ENCODE measurements at regions of chr11 and their contacts with region 1.

Region 1: DNA sequence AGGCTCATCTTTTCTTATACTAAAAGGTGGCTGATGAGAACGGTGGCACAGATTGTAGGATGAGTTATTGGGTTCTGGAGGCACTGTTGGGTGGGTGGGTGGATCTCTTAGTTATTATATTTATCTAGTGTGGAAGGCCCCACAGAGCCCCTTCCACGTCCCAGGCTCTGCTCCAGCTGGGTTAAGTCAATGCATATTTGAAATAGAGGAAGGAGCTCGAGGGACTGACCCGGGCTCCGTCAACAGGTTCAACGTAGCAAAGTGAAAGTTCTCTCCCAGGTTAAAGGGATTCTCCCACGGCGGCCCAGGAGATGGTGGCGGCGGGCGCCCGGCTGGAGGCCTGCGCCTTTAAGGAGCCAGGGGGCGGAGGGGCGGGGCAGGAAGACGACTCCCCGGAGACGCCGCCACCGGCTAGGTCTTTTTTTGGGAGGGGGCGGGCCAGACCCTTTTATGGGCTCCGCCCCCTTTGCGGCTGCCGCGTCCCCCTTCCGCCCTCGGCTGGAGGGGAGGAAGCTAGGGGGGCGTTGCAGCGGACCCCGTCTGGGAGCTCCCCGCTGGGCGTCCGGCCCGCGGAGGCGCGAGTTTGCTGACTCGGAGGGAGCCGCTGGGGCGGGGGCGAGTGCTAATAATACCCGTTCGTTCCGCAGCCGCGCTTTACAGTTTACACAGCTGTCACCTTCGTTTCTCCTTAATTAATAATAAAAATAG is 1.5 kb upstream of the INPPL1 start:
- DNase-seq: peak; percentile 97

Region 2: GRCh38 chr11:72026090-72026489 is 197.0 kb before region 1 on chr11:
- intact Hi-C with region 1: loop called in 1 of 2 experiments (anchors 10 kb)
- DNase-seq: no peak

Region 3: GRCh38 chr11:72162888-72163492 is 60.1 kb before region 1 on chr11:
- intact Hi-C with region 1: no loop called
- DNase-seq: no peak

Region 4: DNA sequence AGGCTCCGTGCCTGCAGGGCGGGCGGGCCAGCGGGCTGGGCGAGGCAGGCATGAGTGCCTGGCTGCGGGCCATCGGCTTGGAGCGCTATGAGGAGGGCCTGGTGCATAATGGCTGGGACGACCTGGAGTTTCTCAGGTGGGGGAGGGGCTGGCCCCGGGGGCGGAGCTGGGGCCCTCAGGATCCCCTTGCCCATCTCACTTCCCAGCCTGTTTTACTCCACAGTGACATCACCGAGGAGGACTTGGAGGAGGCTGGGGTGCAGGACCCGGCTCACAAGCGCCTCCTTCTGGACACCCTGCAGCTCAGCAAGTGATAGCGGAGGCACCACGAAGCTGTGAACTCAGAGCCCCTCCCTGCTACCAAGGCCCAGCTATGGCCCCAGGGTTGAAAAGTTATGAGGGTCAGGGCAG is 15.0 kb after region 1 on chr11:
- intact Hi-C with region 1: loop called in 1 of 2 experiments (anchors 1 kb)
- DNase-seq: no peak

Region 5: DNA sequence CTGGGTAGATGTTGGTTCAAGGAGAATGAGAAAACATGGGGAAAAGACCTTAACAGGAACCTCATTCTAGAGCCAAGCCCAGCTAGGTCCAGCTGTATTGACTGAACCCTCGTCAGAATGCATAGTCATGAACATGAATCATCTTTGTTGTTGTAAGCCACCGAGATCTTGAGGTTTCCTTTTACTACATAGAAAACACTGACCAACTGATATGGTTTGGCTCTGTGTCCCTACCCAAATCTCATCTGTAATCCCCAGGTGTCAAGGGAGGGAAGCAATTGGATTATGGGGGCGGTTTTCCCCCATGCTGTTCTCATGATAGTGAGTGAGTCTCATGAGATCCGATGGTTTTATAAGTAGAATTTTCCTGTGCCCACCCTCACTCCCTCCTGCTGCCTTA is 40.3 kb after region 1 on chr11:
- intact Hi-C with region 1: no loop called
- DNase-seq: no peak

Region 6: GRCh38 chr11:72430741-72431570 is 207.9 kb after region 1 on chr11:
- intact Hi-C with region 1: loop called in 1 of 2 experiments (anchors 10 kb)
- DNase-seq: no peak

Measured in posterior vena cava (tissue), 2 donors.